ENCODE measurements at regions of chr16 and their contacts with region 1.

Region 1: GRCh38 chr16:2752035-2752849 is at the start of gene SRRM2:
- H3K4me3 ChIP-seq: peak within 1 kb of the TSS; percentile 96
- H3K27ac ChIP-seq: peak within 1 kb of the TSS; percentile 97
- H3K4me1 ChIP-seq: peaks cover 5% of the 10 kb centered on the region
- CTCF ChIP-seq: peak; percentile 49

Region 2: DNA sequence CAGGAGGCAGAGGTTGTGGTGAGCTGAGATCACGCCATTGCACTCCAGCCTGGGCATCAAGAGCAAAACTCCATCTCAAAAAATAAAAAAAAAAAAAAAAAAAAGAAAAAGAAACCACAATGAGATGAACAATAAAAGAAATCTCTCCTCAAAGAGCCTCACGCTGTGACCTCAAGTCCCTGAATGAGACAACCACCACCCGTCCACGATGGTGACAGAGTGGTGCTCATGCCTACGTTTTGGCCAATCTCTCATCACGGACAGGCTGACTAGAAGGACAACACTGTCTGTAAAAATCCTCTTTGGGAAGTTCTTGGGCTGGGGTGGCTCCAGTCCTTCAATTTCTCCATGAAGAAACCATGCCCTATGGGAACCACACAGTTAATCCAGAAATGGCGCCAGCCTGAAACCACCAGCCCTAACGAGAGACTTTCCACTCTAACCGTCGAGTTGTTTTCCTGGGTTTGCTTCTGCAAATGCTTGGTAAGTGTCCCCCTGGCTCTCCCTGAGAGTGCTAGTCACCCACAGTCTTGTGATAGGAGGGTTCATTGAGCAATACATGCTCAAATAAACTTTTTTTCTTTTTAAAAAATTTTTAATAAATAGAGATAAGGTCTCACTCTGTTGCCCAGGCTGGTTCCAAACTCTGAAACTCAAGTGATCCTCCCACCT is 17.3 kb before region 1 on chr16:
- CTCF ChIA-PET with region 1: no interaction called
- POLR2A ChIA-PET with region 1: no interaction called
- H3K4me3 ChIP-seq: no peak overlapping the region
- H3K27ac ChIP-seq: no peak overlapping the region
- H3K4me1 ChIP-seq: no peaks in the 10 kb centered on the region
- CTCF ChIP-seq: no peak

Region 3: DNA sequence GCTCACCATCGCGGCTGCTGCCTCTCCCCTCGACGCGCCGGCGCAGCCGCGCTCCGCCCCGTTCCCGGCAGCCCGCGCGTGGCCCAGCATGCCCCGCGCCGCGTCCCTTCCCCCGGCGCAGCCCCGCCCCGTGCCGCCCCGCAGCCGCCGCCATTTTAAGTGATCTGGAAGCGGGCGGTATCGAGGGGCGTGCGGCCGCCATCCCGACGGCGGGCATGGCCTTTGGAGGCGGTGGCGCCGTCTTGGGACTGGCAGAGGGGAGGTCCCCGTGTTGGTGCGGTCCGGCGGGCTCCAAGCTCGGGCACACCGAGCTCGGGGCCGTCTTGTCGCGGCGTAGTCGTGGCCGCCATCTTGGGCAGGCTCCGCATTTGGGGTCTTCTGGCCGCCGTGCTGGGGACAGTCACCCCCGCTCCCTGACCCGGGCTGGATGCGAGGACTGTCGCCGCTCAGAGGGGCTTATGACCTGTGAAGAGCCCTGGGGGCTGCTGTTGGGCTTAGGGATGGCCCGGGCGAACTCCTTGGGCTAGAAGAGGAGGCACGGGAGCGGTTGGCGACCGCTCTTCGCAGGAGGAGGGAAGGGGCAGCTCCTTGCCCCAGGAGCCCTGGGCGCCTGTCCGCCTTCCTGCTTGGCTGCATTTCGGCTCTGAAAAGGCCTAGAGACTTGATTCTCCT is 25.1 kb after region 1 on chr16 and contains the start of gene ELOB:
- CTCF ChIA-PET with region 1: interaction called, 4 read pairs
- POLR2A ChIA-PET with region 1: interaction called, 22 read pairs
- H3K4me3 ChIP-seq: peak within 1 kb of the TSS; percentile 92
- H3K27ac ChIP-seq: peak within 1 kb of the TSS; percentile 99
- H3K4me1 ChIP-seq: peaks cover 2% of the 10 kb centered on the region; the same call in 1 of the 2 replicates
- CTCF ChIP-seq: no peak

Region 4: GRCh38 chr16:2905431-2906387 is 153.5 kb after region 1 on chr16:
- CTCF ChIA-PET with region 1: no interaction called
- POLR2A ChIA-PET with region 1: interaction called, 11 read pairs
- H3K4me3 ChIP-seq: peak overlapping the region; percentile 66
- H3K27ac ChIP-seq: no peak overlapping the region
- H3K4me1 ChIP-seq: peaks cover 3% of the 10 kb centered on the region; the same call in 1 of the 2 replicates
- CTCF ChIP-seq: no peak

Measured in HEK293 (cell line).